ENCODE measurements at regions of chr19 and their contacts with region 1.

Region 1: GRCh38 chr19:17035842-17036424 is 9.3 kb upstream of the CPAMD8 start:
- H3K4me3 Mint-ChIP-seq: peak overlapping the region; percentile 41
- H3K27ac Mint-ChIP-seq: peak overlapping the region; percentile 77
- H3K4me1 Mint-ChIP-seq: peaks cover 15% of the 10 kb centered on the region
- H3K27me3 Mint-ChIP-seq: peaks cover 33% of the 10 kb centered on the region

Region 2: GRCh38 chr19:16957151-16957701 is 78.7 kb before region 1 on chr19:
- intact Hi-C with region 1: loop called (anchors 10 kb)
- H3K4me3 Mint-ChIP-seq: no peak overlapping the region
- H3K27ac Mint-ChIP-seq: peak overlapping the region; percentile 68
- H3K4me1 Mint-ChIP-seq: peaks cover 62% of the 10 kb centered on the region
- H3K27me3 Mint-ChIP-seq: peaks cover 2% of the 10 kb centered on the region

Region 3: GRCh38 chr19:17021793-17022583 is 13.9 kb before region 1 on chr19:
- intact Hi-C with region 1: no loop called
- H3K4me3 Mint-ChIP-seq: peak overlapping the region; percentile 6
- H3K27ac Mint-ChIP-seq: peak overlapping the region; percentile 81
- H3K4me1 Mint-ChIP-seq: peaks cover 49% of the 10 kb centered on the region
- H3K27me3 Mint-ChIP-seq: peaks cover 21% of the 10 kb centered on the region